CD8-positive, alpha-beta T cell (primary cell): ENCODE measurements at regions of chr6 and their contacts with region 1.

Region 1: GRCh38 chr6:162736961-162737360 is 9.2 kb downstream of the PACRG start:
- DNase-seq: peak in 2 of 9 experiments; percentile 6 to 27
- ATAC-seq: no peak
- H3K4me3 ChIP-seq: no peak overlapping the region
- H3K4me3 Mint-ChIP-seq: no peak overlapping the region
- H3K27ac ChIP-seq: no peak overlapping the region
- H3K27ac Mint-ChIP-seq: no peak overlapping the region
- H3K4me1 ChIP-seq: no peaks in the 10 kb centered on the region
- H3K4me1 Mint-ChIP-seq: peaks cover 6% of the 10 kb centered on the region
- H3K27me3 ChIP-seq: no peaks in the 10 kb centered on the region
- H3K27me3 Mint-ChIP-seq: no peaks in the 10 kb centered on the region
- CTCF ChIP-seq: no peak

Region 2: GRCh38 chr6:161393839-161394364 is 1343.1 kb before region 1 on chr6:
- CTCF ChIA-PET with region 1: no interaction called
- POLR2A ChIA-PET with region 1: no interaction called
- intact Hi-C with region 1: loop called in 1 of 2 experiments (anchors 2 kb)
- DNase-seq: peak in 8 of 9 experiments; percentile 28 to 88 (median 52)
- ATAC-seq: peak; percentile 94
- H3K4me3 ChIP-seq: no peak overlapping the region
- H3K4me3 Mint-ChIP-seq: no peak overlapping the region
- H3K27ac ChIP-seq: no peak overlapping the region
- H3K27ac Mint-ChIP-seq: no peak overlapping the region
- H3K4me1 ChIP-seq: peaks cover 7% of the 10 kb centered on the region
- H3K4me1 Mint-ChIP-seq: no peaks in the 10 kb centered on the region
- H3K27me3 ChIP-seq: no peaks in the 10 kb centered on the region
- H3K27me3 Mint-ChIP-seq: peaks cover 3% of the 10 kb centered on the region
- CTCF ChIP-seq: peak; percentile 58

Region 3: DNA sequence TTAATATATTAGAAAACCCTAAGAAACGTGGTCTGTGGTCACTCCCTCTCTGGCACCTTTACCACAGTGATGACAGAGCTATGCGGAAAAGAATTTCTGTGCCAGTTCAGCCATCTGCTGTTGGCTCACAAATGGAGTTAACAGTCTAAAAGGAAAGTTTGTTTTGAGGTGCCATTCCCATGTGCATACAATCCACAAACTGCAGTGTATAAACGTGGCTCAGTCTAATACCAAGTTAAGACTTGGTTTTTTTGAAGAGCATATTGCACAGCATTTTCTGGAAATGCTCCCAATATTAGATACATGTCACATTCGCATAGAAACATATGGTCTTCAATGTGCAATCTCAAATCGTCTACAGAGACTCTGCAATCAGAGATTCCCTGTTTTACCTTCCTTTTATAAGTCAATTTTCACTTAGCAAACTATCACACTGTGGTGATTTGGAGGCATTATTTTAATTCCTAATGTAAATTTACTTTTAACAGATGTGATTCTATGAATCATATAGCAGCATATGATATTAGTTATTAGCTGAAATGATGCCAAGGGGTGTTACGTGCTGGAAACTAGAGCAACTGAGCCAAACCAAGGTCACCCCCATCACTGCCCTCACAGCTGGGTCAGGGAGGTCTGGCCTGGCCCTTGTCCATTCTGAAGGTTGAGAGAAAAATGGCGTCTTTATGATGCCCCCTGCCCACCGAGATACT is 392.9 kb before region 1 on chr6:
- CTCF ChIA-PET with region 1: no interaction called
- POLR2A ChIA-PET with region 1: no interaction called
- intact Hi-C with region 1: no loop called
- DNase-seq: no peak
- ATAC-seq: no peak
- H3K4me3 ChIP-seq: no peak overlapping the region
- H3K4me3 Mint-ChIP-seq: no peak overlapping the region
- H3K27ac ChIP-seq: no peak overlapping the region
- H3K27ac Mint-ChIP-seq: no peak overlapping the region
- H3K4me1 ChIP-seq: no peaks in the 10 kb centered on the region
- H3K4me1 Mint-ChIP-seq: no peaks in the 10 kb centered on the region
- H3K27me3 ChIP-seq: no peaks in the 10 kb centered on the region
- H3K27me3 Mint-ChIP-seq: no peaks in the 10 kb centered on the region
- CTCF ChIP-seq: no peak

Region 4: DNA sequence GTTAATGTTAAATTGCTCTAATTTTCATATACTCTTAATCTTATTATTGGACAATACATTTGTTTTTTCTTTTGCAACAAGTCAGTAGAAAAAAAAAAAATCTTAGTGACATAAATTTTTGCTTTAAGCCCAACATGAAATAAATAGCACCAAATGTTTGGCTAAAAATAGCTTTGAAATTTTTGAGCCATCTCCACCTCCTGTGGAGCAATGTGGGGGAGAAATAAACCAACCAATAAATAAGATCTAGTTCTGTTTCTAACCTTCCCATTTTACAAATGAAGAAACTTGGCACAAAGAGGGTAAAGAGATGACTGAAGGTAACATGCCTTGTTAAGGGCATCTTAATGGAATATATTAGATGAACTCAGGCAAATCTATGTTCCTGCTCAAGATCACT is 100.8 kb before region 1 on chr6:
- CTCF ChIA-PET with region 1: no interaction called
- POLR2A ChIA-PET with region 1: no interaction called
- intact Hi-C with region 1: no loop called
- DNase-seq: no peak
- ATAC-seq: no peak
- H3K4me3 ChIP-seq: no peak overlapping the region
- H3K4me3 Mint-ChIP-seq: no peak overlapping the region
- H3K27ac ChIP-seq: no peak overlapping the region
- H3K27ac Mint-ChIP-seq: no peak overlapping the region
- H3K4me1 ChIP-seq: no peaks in the 10 kb centered on the region
- H3K4me1 Mint-ChIP-seq: no peaks in the 10 kb centered on the region
- H3K27me3 ChIP-seq: no peaks in the 10 kb centered on the region
- H3K27me3 Mint-ChIP-seq: no peaks in the 10 kb centered on the region
- CTCF ChIP-seq: no peak

Region 5: DNA sequence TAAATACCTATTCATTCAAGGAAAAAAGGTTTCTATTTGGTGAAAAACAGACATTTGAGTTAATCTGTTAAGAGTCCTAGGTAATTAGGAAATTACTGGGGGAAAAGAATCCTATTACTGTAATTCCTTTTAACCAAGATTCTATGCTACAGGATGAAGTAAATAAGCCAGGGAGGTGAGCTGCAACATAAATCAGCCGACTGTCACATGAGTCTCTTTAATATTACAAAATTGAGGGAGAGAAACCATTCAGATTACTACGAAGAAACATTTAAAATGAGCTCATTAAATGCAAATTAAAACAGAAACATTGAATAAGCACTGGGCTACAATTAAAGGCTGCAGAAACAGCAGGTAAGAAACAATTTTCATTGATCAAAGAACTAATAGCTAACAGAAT is 14.7 kb before region 1 on chr6:
- CTCF ChIA-PET with region 1: no interaction called
- POLR2A ChIA-PET with region 1: interaction called, 5 read pairs
- intact Hi-C with region 1: loop called in 1 of 2 experiments (anchors 2 kb)
- DNase-seq: no peak
- ATAC-seq: no peak
- H3K4me3 ChIP-seq: no peak overlapping the region
- H3K4me3 Mint-ChIP-seq: no peak overlapping the region
- H3K27ac ChIP-seq: no peak overlapping the region
- H3K27ac Mint-ChIP-seq: no peak overlapping the region
- H3K4me1 ChIP-seq: peaks cover 7% of the 10 kb centered on the region
- H3K4me1 Mint-ChIP-seq: peaks cover 9% of the 10 kb centered on the region
- H3K27me3 ChIP-seq: no peaks in the 10 kb centered on the region
- H3K27me3 Mint-ChIP-seq: no peaks in the 10 kb centered on the region
- CTCF ChIP-seq: no peak

Region 6: GRCh38 chr6:162864911-162865310 is 128.0 kb after region 1 on chr6:
- CTCF ChIA-PET with region 1: no interaction called
- POLR2A ChIA-PET with region 1: no interaction called
- intact Hi-C with region 1: no loop called
- DNase-seq: no peak
- ATAC-seq: no peak
- H3K4me3 ChIP-seq: no peak overlapping the region
- H3K4me3 Mint-ChIP-seq: no peak overlapping the region
- H3K27ac ChIP-seq: no peak overlapping the region
- H3K27ac Mint-ChIP-seq: no peak overlapping the region
- H3K4me1 ChIP-seq: no peaks in the 10 kb centered on the region
- H3K4me1 Mint-ChIP-seq: no peaks in the 10 kb centered on the region
- H3K27me3 ChIP-seq: no peaks in the 10 kb centered on the region
- H3K27me3 Mint-ChIP-seq: no peaks in the 10 kb centered on the region
- CTCF ChIP-seq: no peak